ENCODE measurements at regions of chr5 and their contacts with region 1.

Region 1: GRCh38 chr5:65066385-65067146 is 297.8 kb downstream of the CWC27 start:
- DNase-seq: no peak
- ATAC-seq: no peak
- H3K4me3 ChIP-seq: no peak overlapping the region
- H3K27ac ChIP-seq: no peak overlapping the region
- H3K4me1 ChIP-seq: peaks cover 14% of the 10 kb centered on the region
- CTCF ChIP-seq: no peak
- EP300 ChIP-seq: no peak
- POLR2A ChIP-seq: no peak
- RAD21 ChIP-seq: no peak

Region 2: DNA sequence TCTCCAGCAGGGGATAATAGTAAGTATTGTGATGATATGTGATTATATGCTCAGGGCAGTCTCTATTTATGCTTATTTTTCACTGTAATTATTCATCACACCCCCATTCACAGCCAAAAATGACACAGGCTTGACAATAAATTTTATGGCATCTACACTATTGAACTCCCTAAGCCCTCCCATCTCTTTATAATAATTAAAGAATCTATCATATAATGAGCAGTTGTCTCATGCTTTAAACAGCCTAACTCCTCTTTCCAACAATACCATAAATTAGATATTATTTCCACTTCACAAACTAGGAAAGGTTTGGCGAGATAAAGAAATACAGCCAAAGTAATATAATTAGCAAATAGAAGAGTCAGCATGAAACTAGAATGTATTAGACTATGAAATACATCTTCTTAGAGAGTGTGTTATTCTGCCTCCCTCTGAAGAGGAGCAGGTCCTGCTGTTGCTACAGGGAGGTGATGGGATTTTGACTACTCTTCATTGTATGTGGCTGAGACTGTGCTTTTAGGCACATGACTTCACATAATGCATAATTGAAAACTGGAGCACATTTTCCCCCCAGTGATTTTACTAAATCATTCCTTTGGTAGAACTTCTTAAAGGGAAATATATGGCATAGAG is 1593.1 kb before region 1 on chr5:
- CTCF ChIA-PET with region 1: no interaction called
- POLR2A ChIA-PET with region 1: interaction called, 11 read pairs
- DNase-seq: no peak
- ATAC-seq: no peak
- H3K4me3 ChIP-seq: no peak overlapping the region
- H3K27ac ChIP-seq: no peak overlapping the region
- H3K4me1 ChIP-seq: no peaks in the 10 kb centered on the region
- CTCF ChIP-seq: no peak
- EP300 ChIP-seq: no peak
- POLR2A ChIP-seq: no peak
- RAD21 ChIP-seq: no peak

Region 3: DNA sequence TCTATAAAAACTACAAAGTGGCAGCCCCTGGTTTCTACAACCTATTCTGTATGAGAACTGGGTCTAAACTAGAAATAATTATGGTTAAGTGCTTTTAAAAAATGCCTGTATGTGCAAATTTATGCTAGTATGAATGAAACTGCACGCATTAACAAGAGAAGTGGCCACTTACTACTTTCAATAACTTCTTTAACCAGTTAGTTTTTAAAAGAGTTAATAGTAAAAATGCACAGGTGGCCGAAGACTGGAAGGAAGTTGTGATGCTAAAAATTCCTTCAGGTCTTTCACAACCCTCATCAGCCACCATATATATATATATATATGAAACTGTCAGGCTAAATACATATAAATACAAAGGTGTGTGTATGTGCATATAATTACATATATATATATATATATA is 339.4 kb before region 1 on chr5:
- CTCF ChIA-PET with region 1: no interaction called
- POLR2A ChIA-PET with region 1: no interaction called
- DNase-seq: no peak
- ATAC-seq: no peak
- H3K4me3 ChIP-seq: no peak overlapping the region
- H3K27ac ChIP-seq: no peak overlapping the region
- H3K4me1 ChIP-seq: no peaks in the 10 kb centered on the region
- CTCF ChIP-seq: no peak
- EP300 ChIP-seq: no peak
- POLR2A ChIP-seq: no peak
- RAD21 ChIP-seq: no peak

Region 4: DNA sequence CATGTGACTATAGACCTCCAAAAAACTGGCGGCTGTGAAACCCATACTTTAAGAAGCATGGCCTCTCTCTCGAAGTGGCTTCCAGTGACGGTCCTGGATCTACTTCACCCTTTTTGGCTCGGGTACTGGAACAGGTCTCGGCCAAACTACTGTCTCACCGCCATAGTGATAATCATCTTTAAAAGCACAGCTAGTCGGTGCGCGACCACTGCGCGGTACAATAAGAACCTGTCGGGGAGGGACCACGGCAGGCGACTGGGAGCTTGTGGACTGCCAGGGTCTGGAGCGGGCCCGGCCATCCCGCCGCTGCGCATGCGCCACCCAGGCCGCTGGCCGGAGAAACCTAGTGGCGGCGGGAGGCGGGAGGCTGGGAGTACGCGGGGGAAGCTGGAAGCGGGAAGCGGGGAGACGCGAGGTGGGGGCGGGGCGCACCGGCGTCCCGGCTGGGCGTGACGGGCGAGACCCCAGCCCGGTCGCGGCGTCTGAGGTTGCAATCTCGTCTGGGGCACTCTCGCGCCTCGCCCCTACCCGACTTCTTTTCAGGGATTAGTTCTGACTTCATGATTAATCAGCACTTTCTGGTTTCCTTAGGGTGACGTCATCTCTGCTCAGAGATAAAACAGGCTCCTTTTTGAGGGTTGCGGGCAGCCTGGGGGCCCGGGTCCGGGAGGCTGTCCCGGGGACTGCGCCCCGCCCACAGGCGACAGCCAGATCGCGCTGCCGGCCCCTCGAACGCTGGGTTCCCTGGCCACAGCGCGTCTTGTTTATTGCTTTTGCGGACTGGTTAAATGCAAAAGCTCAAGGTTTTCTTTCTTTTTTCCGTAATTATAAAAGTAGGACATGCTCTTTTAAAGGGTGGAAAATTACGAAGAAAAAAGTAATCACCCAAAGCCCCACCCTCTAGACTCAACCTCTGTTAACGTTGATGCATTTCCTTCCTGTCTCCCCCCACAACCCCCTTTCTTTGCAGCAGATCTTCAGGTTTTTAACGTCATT is 31.1 kb before region 1 on chr5:
- CTCF ChIA-PET with region 1: interaction called, 3 read pairs
- POLR2A ChIA-PET with region 1: interaction called, 11 read pairs
- DNase-seq: peak; percentile 89 to 91
- ATAC-seq: peak; percentile 94 to 97
- H3K4me3 ChIP-seq: peak overlapping the region; percentile 55
- H3K27ac ChIP-seq: peak overlapping the region; percentile 94
- H3K4me1 ChIP-seq: peaks cover 9% of the 10 kb centered on the region; the same call in 2 of the 3 replicates
- CTCF ChIP-seq: no peak
- EP300 ChIP-seq: no peak
- POLR2A ChIP-seq: peak; percentile 63
- RAD21 ChIP-seq: peak in 1 of 2 experiments; percentile 20; a peak in 1 of 5 replicates

Region 5: GRCh38 chr5:65279603-65280002 is 213.0 kb after region 1 on chr5:
- CTCF ChIA-PET with region 1: no interaction called
- POLR2A ChIA-PET with region 1: no interaction called
- DNase-seq: no peak
- ATAC-seq: no peak
- H3K4me3 ChIP-seq: no peak overlapping the region
- H3K27ac ChIP-seq: no peak overlapping the region
- H3K4me1 ChIP-seq: no peaks in the 10 kb centered on the region
- CTCF ChIP-seq: no peak
- EP300 ChIP-seq: no peak
- POLR2A ChIP-seq: no peak
- RAD21 ChIP-seq: no peak

Measured in A549 (cell line).